ENCODE measurements at regions of chr1 and their contacts with region 1.

Region 1: DNA sequence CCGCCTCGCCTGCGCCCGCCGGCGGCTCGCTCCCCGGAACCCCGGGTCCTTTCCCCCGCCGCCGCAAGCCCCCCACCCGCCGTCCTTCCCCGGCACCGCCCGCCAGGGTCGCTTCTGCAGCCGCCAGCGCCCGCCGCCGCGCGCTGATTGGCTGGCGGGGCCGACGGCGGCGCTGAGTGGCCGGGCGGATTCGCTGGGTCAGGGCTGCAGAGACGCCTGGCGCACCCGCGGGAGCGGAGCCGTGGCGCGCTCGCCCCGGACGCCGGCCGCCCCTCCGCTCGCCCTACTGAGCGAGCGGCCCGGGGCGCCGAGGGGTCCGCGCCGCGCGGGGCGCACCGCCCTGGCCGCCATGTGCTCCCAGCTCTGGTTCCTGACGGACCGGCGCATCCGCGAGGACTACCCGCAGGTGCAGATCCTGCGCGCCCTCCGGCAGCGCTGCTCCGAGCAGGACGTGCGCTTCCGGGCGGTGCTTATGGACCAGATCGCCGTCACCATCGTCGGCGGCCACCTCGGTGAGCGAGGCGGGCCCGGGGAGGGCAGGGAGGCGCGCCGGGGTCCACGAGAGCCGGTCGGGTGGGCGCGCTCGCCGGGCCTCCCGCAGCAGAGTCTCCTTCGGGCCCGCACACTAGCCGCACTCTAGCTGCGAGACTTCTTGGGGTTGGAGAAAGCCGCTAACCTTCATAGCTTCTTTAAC is at the start of gene RIMKLA:
- DNase-seq: peak in 1 of 2 donors; percentile 27
- H3K4me3 ChIP-seq: peak within 1 kb of the TSS; percentile 48 to 75 (median 66)
- H3K27ac ChIP-seq: no peak within 1 kb of the TSS
- H3K4me1 ChIP-seq: peaks cover 0 to 5% of the 10 kb centered on the region in 2 donors
- H3K27me3 ChIP-seq: peaks cover 0 to 11% of the 10 kb centered on the region in 2 donors
- CTCF ChIP-seq: no peak
- POLR2A ChIP-seq: no peak
- total RNA-seq, gene RIMKLA: 0.32 to 0.73 (median 0.66) TPM

Region 2: DNA sequence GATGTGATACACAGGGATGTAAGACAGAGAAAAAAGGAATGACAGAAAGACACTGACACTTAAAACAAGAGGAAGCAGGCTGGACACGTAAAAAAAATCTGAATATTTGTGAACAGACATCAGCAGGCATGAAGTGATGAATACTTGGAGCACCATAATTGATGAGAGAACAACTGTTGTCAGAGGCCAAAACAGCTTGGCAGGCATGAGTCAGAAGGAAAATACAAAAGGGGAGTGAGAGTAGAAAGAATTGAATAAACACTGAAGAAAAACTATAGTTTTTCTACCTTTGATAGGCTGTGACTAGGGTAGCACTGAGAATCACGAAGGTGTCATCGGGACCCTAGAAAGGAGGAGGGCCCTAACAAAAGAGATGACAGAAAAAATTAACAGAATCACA is 194.6 kb before region 1 on chr1:
- intact Hi-C with region 1: no loop called
- DNase-seq: no peak
- H3K4me3 ChIP-seq: no peak overlapping the region
- H3K27ac ChIP-seq: no peak overlapping the region
- H3K4me1 ChIP-seq: no peaks in the 10 kb centered on the region
- H3K27me3 ChIP-seq: no peaks in the 10 kb centered on the region
- CTCF ChIP-seq: no peak
- POLR2A ChIP-seq: no peak

Region 3: DNA sequence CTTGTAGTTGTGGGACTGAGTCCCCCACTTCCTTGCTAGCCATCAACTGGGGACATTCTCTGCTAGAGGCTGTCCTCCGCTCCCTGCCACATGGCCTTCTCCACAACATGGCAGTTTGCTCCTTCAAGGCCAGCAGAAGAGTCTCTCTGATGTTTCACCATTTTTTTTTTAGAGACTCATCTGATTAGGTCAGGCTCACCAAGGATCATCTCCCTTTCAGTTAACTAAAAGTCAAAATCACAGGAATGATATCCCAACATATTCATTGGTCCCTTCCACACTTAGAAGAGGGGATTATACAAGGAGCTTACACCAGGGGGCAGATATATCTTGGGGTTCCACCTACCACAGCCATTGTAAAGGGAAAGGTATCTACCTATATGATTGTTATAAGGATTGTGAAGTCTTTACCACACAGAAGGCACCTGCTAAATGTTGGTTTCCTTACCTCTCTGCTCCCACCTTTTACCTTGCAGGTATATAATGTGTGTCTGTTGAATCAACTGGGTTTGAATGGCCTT is 23.2 kb after region 1 on chr1:
- intact Hi-C with region 1: loop called (anchors 1 kb)
- DNase-seq: no peak
- H3K4me3 ChIP-seq: no peak overlapping the region
- H3K27ac ChIP-seq: no peak overlapping the region
- H3K4me1 ChIP-seq: no peaks in the 10 kb centered on the region
- H3K27me3 ChIP-seq: no peaks in the 10 kb centered on the region
- CTCF ChIP-seq: no peak
- POLR2A ChIP-seq: no peak

Region 4: DNA sequence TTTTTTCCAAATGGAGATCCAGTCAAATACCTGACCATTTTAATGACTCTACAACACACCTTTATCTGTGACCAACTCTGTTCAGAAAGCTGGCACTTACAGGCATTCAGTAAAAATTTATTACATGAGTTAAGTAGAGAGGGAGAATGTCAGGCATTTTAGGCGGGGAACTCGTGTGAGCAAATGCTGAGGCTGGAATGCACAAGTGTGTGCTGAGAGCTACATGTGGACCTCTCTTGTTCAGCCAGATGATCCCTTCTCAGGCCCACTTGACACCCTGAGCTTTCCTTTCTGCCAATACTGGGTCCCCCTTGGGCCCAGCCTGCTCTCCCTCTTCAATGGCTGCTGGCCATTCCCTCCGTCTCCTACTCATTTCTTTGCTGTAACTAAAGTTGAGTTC is 289.2 kb after region 1 on chr1:
- intact Hi-C with region 1: loop called (anchors 5 kb)
- DNase-seq: no peak
- H3K4me3 ChIP-seq: no peak overlapping the region
- H3K27ac ChIP-seq: no peak overlapping the region
- H3K4me1 ChIP-seq: no peaks in the 10 kb centered on the region
- H3K27me3 ChIP-seq: no peaks in the 10 kb centered on the region
- CTCF ChIP-seq: no peak
- POLR2A ChIP-seq: no peak